ENCODE measurements at regions of chr22 and their contacts with region 1.

Region 1: DNA sequence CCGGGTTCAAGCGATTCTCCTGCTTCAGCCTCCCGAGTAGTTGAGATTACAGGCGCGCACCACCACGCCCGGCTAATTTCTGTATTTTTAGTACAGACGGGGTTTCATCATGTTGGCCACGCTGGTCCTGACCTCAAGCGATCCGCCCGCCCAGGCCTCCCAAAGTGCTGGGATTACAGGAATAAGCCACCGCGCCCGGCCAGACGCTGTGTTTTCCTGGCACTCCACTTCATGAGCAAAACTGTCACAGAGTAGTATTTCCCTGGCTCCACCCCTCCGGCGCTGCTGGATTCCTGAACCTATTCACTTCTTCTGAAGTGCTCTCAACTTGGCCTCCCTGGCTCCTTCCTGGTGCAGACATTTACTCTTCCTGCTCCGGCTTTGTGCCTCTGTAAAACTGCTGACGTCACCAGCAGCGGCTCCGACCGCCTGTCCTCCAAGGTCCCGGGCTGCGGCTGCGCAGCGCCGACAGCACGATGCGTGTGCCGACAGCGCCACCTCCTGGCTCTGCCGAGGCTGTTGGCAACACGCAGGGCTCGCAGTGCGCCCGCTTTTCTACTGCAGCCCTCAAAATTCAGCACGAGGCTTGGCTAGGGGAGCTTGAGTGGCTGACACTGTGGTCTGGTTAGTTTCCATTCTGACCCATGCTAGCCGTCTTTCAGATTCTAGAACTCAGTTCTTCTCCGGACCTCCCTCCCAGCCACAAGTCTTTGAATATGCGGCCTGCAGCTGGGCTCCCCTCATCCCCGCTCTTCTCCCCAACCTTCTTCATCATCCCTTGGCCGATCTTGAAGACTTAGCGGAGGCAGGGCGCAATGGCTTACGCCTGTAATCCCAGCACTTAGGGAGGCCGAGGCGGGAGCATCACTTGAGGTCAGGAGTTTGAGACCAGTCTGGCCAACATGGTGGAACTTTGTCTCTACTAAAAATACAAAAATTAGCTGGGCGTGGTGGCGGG is 36.6 kb downstream of the APOL3 start:
- DNase-seq: peak; percentile 99 to 100
- H3K4me3 ChIP-seq: no peak overlapping the region
- H3K27ac ChIP-seq: peak overlapping the region; percentile 76 to 90 (median 85)
- H3K4me1 ChIP-seq: peaks cover 5 to 11% of the 10 kb centered on the region in 2 donors
- H3K27me3 ChIP-seq: no peaks in the 10 kb centered on the region
- CTCF ChIP-seq: peak; percentile 95 to 100 (median 98)
- POLR2A ChIP-seq: peak in 1 of 2 donors; percentile 56

Region 2: GRCh38 chr22:35883031-35883620 is 240.8 kb before region 1 on chr22:
- intact Hi-C with region 1: no loop called
- DNase-seq: no peak
- H3K4me3 ChIP-seq: no peak overlapping the region
- H3K27ac ChIP-seq: peak overlapping the region; percentile 51 to 66 (median 53)
- H3K4me1 ChIP-seq: peaks cover 51 to 65% of the 10 kb centered on the region in 2 donors
- H3K27me3 ChIP-seq: no peaks in the 10 kb centered on the region
- CTCF ChIP-seq: no peak
- POLR2A ChIP-seq: no peak

Region 3: GRCh38 chr22:36028646-36029405 is 95.1 kb before region 1 on chr22 and contains the start of gene RBFOX2:
- intact Hi-C with region 1: no loop called
- DNase-seq: peak; percentile 98
- H3K4me3 ChIP-seq: peak within 1 kb of the TSS; percentile 42 to 91 (median 63)
- H3K27ac ChIP-seq: peak within 1 kb of the TSS; percentile 83 to 87 (median 85)
- H3K4me1 ChIP-seq: peaks cover 15 to 19% of the 10 kb centered on the region in 2 donors
- H3K27me3 ChIP-seq: no peaks in the 10 kb centered on the region
- CTCF ChIP-seq: no peak
- POLR2A ChIP-seq: peak in 1 of 2 donors; percentile 80
- total RNA-seq, gene RBFOX2: 103 to 139 (median 108) TPM

Region 4: GRCh38 chr22:36065775-36066559 is 58.0 kb before region 1 on chr22:
- intact Hi-C with region 1: loop called (anchors 5 kb)
- DNase-seq: peak; percentile 97
- H3K4me3 ChIP-seq: peak overlapping the region in 2 of 3 donors; percentile 4 to 43
- H3K27ac ChIP-seq: peak overlapping the region; percentile 73 to 93 (median 87)
- H3K4me1 ChIP-seq: no peaks in the 10 kb centered on the region
- H3K27me3 ChIP-seq: no peaks in the 10 kb centered on the region
- CTCF ChIP-seq: peak; percentile 98 to 100 (median 100)
- POLR2A ChIP-seq: peak in 1 of 2 donors; percentile 75

Measured in thyroid gland (tissue), 4 donors.